ENCODE measurements at regions of chr2 and their contacts with region 1.

Region 1: GRCh38 chr2:197011799-197012641 is 85.5 kb upstream of the PGAP1 start:
- DNase-seq: peak; percentile 57
- ATAC-seq: peak; percentile 97
- H3K4me3 ChIP-seq: no peak overlapping the region
- H3K27ac ChIP-seq: no peak overlapping the region
- H3K4me1 ChIP-seq: no peaks in the 10 kb centered on the region
- H3K27me3 ChIP-seq: peaks cover 0 to 8% of the 10 kb centered on the region in 2 experiments; a peak in 2 of 5 replicates
- CTCF ChIP-seq: peak; percentile 83
- EP300 ChIP-seq: no peak
- POLR2A ChIP-seq: no peak
- RAD21 ChIP-seq: peak; percentile 41; the same call in 1 of the 2 replicates

Region 2: GRCh38 chr2:196849895-196850294 is 162.1 kb before region 1 on chr2:
- CTCF ChIA-PET with region 1: no interaction called
- POLR2A ChIA-PET with region 1: no interaction called
- in situ Hi-C with region 1: no loop called
- intact Hi-C with region 1: loop called (anchors 10 kb)
- DNase-seq: peak; percentile 14
- ATAC-seq: peak; percentile 82
- H3K4me3 ChIP-seq: no peak overlapping the region
- H3K27ac ChIP-seq: no peak overlapping the region
- H3K4me1 ChIP-seq: peaks cover 6% of the 10 kb centered on the region; the same call in 1 of the 2 replicates
- H3K27me3 ChIP-seq: no peaks in the 10 kb centered on the region
- CTCF ChIP-seq: peak; percentile 32; the same call in 1 of the 2 replicates
- EP300 ChIP-seq: no peak
- POLR2A ChIP-seq: no peak
- RAD21 ChIP-seq: no peak

Region 3: DNA sequence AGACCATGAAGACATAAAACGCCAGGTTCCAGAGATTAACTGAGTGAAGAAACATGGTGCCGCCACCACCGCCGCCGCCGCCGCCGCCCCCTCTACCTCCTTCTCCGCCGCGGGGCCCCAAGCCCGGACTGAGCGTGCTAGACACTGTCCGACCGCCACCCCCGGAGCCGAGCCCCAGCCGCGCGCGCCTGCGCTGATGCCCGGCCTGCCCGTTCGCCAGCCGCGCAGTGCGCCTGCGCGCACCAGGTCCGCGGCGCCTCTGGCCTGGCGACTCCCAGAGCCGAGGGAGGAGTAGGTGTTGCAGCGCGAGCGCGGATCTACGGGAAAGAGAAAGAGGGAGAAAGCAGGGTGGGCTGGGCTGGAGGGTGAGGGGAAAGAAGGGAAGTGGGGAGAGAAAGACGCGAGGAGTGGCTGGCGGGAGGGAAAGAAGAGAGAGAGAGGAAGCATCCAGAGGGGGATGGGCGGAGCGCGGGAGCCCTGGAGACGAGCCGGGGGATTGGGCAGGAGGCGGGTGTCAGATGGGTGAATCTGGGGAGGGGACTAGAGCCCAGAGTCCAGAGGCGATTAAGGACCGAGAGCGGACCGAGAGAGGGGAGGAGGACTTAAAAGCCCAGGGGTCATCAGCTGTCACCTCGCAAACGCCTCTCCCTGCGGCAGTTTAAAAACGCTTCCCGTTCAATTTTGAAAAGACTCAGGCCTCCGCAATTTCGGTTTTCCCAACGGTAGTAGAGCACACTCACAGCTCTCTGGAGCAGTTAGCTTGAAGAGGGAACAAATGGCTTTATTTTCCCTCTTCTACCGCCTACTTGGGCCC is 85.3 kb before region 1 on chr2 and contains the start of gene PGAP1:
- CTCF ChIA-PET with region 1: no interaction called
- POLR2A ChIA-PET with region 1: no interaction called
- in situ Hi-C with region 1: no loop called
- intact Hi-C with region 1: loop called (anchors 5 kb)
- DNase-seq: peak; percentile 90
- ATAC-seq: peak; percentile 93
- H3K4me3 ChIP-seq: peak within 1 kb of the TSS; percentile 96 to 100 (median 98)
- H3K27ac ChIP-seq: peak within 1 kb of the TSS; percentile 84
- H3K4me1 ChIP-seq: peaks cover 29% of the 10 kb centered on the region
- H3K27me3 ChIP-seq: no peaks in the 10 kb centered on the region; a peak in 2 of 5 replicates
- CTCF ChIP-seq: peak; percentile 22; the same call in 1 of the 2 replicates
- EP300 ChIP-seq: peak in 1 of 2 experiments; percentile 10; a peak in 2 of 4 replicates
- POLR2A ChIP-seq: peak; percentile 54 to 74; a peak in 3 of 4 replicates
- RAD21 ChIP-seq: 0 out of 2 replicates have a peak, but pooled peaks have one; percentile 9
- total RNA-seq, gene PGAP1: 4.8 and 6.4 TPM in 2 replicates

Region 4: GRCh38 chr2:197108758-197109157 is 96.7 kb after region 1 on chr2:
- CTCF ChIA-PET with region 1: no interaction called
- POLR2A ChIA-PET with region 1: no interaction called
- in situ Hi-C with region 1: no loop called
- intact Hi-C with region 1: no loop called
- DNase-seq: no peak
- ATAC-seq: peak; percentile 71
- H3K4me3 ChIP-seq: no peak overlapping the region
- H3K27ac ChIP-seq: no peak overlapping the region
- H3K4me1 ChIP-seq: peaks cover 8% of the 10 kb centered on the region
- H3K27me3 ChIP-seq: no peaks in the 10 kb centered on the region; a peak in 1 of 5 replicates
- CTCF ChIP-seq: no peak
- EP300 ChIP-seq: no peak
- POLR2A ChIP-seq: no peak
- RAD21 ChIP-seq: no peak

Region 5: GRCh38 chr2:197168705-197169104 is 156.7 kb after region 1 on chr2:
- CTCF ChIA-PET with region 1: interaction called, 5 read pairs
- POLR2A ChIA-PET with region 1: no interaction called
- in situ Hi-C with region 1: loop called (anchors 10 kb)
- intact Hi-C with region 1: loop called (anchors 1 kb)
- DNase-seq: peak; percentile 65
- ATAC-seq: peak; percentile 99
- H3K4me3 ChIP-seq: no peak overlapping the region
- H3K27ac ChIP-seq: no peak overlapping the region
- H3K4me1 ChIP-seq: no peaks in the 10 kb centered on the region
- H3K27me3 ChIP-seq: peaks cover 0 to 1% of the 10 kb centered on the region in 2 experiments; a peak in 1 of 5 replicates
- CTCF ChIP-seq: peak; percentile 82
- EP300 ChIP-seq: no peak
- POLR2A ChIP-seq: no peak
- RAD21 ChIP-seq: peak; percentile 75